ENCODE measurements at regions of chr1 and their contacts with region 1.

Region 1: DNA sequence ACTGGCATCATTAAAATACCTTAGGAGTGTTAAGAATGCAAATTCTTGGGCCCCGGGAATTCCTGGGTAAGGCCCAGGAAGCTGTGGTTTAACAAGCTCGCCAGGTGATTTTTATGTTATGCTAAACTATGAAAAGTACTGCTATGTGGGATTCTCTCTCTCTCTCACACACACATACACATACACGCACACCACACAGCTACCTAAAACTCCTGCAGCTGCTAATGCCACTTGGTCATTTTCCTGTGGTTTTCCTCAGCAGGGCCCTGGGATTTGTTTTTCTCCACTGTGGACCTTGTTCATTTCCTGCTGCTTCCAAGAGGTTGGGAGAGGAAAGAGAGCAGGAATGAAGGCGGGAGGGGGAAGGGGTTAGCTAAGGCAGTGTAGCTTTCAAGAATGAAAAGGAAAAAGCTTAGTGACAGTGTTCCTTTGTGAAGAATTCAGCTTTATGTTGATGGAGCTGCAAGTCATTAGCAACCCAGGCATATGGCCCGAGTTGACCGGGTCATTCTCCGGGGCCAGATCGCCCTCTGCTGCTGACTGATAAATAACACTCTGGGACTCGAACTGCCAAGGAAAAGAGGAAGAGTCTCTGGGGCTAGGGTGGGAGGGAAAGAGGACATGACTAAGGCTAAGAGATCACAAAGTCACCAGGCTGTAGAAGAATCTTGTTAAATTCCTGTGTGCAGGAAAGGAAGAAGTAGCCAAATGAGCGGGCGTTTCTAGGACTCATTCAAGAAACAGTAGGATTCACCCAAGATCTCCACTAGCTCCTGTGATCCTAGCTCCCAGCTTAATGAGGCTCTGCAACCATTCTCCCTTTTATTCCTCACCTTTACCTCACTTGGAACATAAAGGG is 30.5 kb upstream of the LRIG2 start:
- DNase-seq: peak; percentile 57
- H3K4me3 ChIP-seq: no peak overlapping the region
- H3K27me3 ChIP-seq: no peaks in the 10 kb centered on the region
- CTCF ChIP-seq: peak; percentile 67

Region 2: GRCh38 chr1:112674439-112674985 is 368.0 kb before region 1 on chr1 and contains the start of gene MOV10:
- CTCF ChIA-PET with region 1: no interaction called
- POLR2A ChIA-PET with region 1: no interaction called
- DNase-seq: no peak
- H3K4me3 ChIP-seq: peak within 1 kb of the TSS; percentile 54
- H3K27me3 ChIP-seq: no peaks in the 10 kb centered on the region
- CTCF ChIP-seq: no peak
- polyA plus RNA-seq, gene MOV10: 48.9 and 93.7 TPM in 2 replicates

Region 3: DNA sequence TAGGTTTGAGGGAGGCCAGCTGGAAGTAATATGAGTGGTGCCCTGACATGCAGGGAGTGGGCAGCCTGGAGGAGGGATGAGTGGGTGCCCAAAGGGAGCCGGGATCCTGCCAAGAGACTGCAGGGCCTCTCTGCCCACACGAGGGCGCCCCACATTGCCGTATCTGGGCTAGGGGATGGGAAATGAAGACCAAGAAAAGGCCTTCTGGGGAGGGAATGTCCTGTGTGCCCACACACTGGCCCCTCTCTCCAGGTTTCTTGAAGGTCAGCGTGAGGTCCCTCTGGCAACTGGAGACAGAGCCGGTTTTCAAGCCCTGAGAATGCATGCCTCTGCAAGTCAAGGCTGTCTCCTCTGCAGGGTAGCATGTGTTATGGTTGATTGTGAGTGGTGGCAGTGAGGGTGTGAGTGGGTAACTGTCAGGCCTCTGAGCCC is 233.2 kb before region 1 on chr1:
- CTCF ChIA-PET with region 1: interaction called, 33 read pairs
- POLR2A ChIA-PET with region 1: no interaction called
- DNase-seq: no peak
- H3K4me3 ChIP-seq: no peak overlapping the region
- H3K27me3 ChIP-seq: 0 out of 2 replicates have a peak, but pooled peaks cover 4% of the 10 kb centered on the region
- CTCF ChIP-seq: peak; percentile 98

Region 4: DNA sequence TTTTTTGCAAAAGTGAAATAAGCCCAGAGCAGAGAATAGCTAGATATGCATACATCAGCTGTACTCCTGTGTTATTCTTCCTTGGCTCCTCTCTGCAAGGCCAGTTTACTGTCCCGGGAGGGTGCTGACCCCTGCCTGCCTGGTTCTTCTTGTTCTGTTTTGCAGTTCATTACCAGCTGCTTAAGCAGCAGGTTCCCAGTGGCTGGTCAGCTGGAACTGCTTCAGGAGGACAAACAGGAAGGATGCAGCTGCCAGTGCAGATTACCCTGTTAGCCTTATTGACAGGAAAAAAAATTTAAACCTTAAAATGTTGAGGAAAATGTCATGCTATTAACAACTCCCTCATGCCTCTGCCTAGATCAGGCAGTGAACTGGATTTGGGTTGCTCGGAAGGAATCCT is 14.5 kb after region 1 on chr1:
- CTCF ChIA-PET with region 1: interaction called, 19 read pairs
- POLR2A ChIA-PET with region 1: no interaction called
- DNase-seq: no peak
- H3K4me3 ChIP-seq: no peak overlapping the region
- H3K27me3 ChIP-seq: no peaks in the 10 kb centered on the region
- CTCF ChIP-seq: no peak

Measured in BJ (cell line).